Breast epithelium (tissue), 4 donors: ENCODE measurements at regions of chr4 and their contacts with region 1.

Region 1: GRCh38 chr4:123667496-123667895 is 270.9 kb downstream of the SPRY1 start:
- DNase-seq: no peak
- H3K4me3 ChIP-seq: no peak overlapping the region
- H3K27ac ChIP-seq: no peak overlapping the region
- H3K4me1 ChIP-seq: no peaks in the 10 kb centered on the region
- H3K27me3 ChIP-seq: no peaks in the 10 kb centered on the region
- CTCF ChIP-seq: no peak
- POLR2A ChIP-seq: no peak

Region 2: DNA sequence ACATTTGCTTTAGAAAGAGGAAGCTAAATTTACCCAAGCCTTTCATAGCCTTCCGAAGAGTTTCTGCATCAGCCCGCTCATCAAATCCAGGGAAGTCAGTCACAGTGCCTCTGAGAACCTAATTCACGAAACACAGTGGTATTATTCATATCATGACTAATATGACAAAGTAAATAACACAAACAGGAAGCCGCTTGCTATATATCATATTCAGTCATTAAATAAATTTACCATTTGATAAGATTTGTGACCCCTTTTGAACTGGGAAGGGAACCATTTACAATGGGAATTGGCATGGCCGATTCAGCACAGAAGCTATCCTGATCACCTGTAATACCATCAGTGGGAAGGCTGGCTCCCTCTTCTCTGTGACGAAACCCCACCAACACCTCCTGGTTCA is 1981.2 kb before region 1 on chr4:
- intact Hi-C with region 1: no loop called
- DNase-seq: no peak
- H3K4me3 ChIP-seq: no peak overlapping the region
- H3K27ac ChIP-seq: no peak overlapping the region
- H3K4me1 ChIP-seq: no peaks in the 10 kb centered on the region
- H3K27me3 ChIP-seq: no peaks in the 10 kb centered on the region
- CTCF ChIP-seq: no peak
- POLR2A ChIP-seq: no peak

Region 3: DNA sequence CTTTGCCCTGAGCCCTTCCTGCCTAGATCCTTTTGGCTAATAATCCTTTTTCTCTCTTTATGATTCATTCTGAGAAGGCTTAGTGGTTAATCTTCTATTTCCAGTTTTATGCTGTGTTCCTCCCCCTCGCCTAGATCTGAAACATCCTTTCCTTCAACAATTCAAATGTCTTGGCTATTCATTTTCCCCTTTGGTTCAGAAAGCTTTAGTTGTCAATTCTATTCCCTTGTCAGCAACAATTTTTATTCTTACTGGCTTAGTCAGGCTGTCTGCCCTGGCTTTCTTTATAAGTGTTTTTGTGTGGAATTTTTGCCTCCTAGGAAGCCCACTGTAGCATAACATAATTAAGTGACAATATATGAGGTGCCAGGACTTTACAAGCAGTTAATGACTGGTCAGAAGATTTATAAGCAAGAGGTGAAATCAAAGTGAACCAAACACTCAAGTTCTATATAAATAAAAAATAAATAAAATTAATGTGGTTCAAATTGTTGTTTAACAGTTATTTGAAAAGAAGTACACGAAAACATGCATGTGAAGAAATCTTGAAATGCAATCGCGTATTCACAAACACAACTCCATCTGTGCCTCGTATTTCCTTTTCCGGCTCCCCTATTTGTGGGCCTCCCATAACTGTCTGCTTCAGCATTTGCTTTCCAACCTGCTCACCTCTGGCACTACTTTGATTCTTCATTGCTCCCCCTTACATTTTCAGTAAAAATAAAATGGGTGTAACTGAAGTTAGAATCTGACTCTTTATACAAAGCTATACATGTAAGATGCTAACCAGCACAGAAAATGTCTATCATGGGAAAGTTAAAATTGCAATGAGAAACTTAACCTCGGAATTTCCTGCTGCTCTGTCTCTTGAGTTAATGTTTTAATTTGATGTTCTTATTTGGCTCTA is 35.5 kb before region 1 on chr4:
- intact Hi-C with region 1: loop called (anchors 2 kb)
- DNase-seq: no peak
- H3K4me3 ChIP-seq: no peak overlapping the region
- H3K27ac ChIP-seq: no peak overlapping the region
- H3K4me1 ChIP-seq: no peaks in the 10 kb centered on the region
- H3K27me3 ChIP-seq: no peaks in the 10 kb centered on the region
- CTCF ChIP-seq: no peak
- POLR2A ChIP-seq: no peak